ENCODE measurements at regions of chr1 and their contacts with region 1.

Region 1: DNA sequence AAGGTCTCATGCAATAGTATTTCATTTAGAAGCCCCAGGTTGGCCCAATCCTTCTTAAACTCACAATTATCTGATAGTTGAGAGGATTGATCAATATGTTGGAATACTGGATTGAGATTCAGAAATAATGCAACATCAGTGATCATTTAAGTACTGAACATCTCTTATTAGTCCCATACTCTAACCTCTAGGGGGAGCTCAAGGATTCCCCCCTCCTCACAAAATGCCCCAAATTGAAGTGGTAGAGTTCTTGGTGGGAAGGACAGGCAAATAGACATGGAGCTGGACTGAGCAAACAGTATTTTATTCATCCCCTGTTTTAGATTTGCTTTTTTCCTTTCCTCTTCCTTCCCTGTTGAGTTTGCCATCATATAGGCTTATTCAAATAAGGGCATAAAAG is 62.8 kb downstream of the NGF start:
- DNase-seq: no peak
- H3K4me3 ChIP-seq: no peak overlapping the region
- H3K27ac ChIP-seq: no peak overlapping the region
- H3K4me1 ChIP-seq: no peaks in the 10 kb centered on the region
- H3K27me3 ChIP-seq: no peaks in the 10 kb centered on the region
- CTCF ChIP-seq: no peak
- POLR2A ChIP-seq: no peak

Region 2: DNA sequence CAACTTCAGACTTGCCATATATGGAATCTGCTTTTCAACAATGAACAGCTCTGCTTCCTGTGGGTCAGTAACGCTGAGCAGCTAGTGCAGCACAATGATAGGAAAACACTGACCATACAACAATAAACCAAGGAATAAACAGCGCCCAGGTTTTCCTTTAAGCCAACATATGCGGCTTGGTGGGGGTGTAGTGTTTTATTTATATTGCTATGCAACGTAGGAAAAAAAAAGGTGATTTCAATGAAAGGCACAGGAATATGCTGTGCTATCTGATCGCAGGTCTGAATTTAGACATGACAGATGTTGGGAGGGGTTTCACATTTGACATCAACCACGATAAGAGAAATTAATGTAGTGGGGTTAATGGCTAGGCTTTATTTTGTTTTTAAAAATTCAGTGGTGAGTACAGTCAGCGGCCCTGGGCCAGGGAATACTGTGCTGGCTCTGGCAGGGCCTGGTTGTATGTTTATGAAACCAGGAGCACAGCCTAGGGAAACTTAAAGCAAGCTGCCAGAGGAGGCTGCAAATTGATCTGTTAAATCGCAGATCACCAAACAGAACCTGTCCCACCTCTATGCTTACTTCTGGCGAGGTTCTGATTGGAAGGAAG is 190.2 kb before region 1 on chr1:
- intact Hi-C with region 1: no loop called
- DNase-seq: no peak
- H3K4me3 ChIP-seq: no peak overlapping the region
- H3K27ac ChIP-seq: peak overlapping the region; percentile 6 to 30
- H3K4me1 ChIP-seq: no peaks in the 10 kb centered on the region
- H3K27me3 ChIP-seq: peaks cover 0 to 3% of the 10 kb centered on the region in 2 donors
- CTCF ChIP-seq: no peak
- POLR2A ChIP-seq: no peak

Region 3: GRCh38 chr1:115227346-115228135 is 47.7 kb before region 1 on chr1:
- intact Hi-C with region 1: loop called (anchors 2 kb)
- DNase-seq: no peak
- H3K4me3 ChIP-seq: no peak overlapping the region
- H3K27ac ChIP-seq: no peak overlapping the region
- H3K4me1 ChIP-seq: peaks cover 0 to 7% of the 10 kb centered on the region in 2 donors
- H3K27me3 ChIP-seq: peaks cover 0 to 9% of the 10 kb centered on the region in 2 donors
- CTCF ChIP-seq: no peak
- POLR2A ChIP-seq: no peak